Tibial artery (tissue), 4 donors: ENCODE measurements at regions of chr11 and their contacts with region 1.

Region 1: DNA sequence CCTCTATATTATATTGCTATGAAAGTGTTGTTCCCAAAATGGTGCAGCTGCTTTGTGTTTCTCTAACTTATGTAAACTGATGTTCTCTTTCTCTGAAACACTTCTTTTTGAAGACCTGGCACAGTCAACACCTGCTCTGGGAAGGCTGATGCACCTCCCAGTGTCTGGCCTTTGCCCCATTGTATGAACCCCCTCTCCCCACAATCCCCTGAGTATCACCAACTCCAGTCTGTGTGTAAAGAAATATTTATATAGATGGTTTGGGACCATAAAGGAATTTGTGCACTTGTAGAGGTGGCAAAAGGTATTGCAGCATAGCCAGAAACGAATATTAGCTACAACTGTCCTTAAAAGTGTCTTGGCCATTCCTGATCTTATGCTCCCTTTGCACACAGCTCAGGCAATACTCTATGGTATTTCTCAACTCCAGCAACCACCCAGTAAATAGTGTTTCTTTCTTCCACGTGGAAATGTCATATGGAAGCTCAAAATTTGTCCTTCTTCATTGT is 365.2 kb upstream of the DDI1 start:
- DNase-seq: no peak
- H3K4me3 ChIP-seq: no peak overlapping the region
- H3K27ac ChIP-seq: no peak overlapping the region
- H3K4me1 ChIP-seq: no peaks in the 10 kb centered on the region
- H3K27me3 ChIP-seq: no peaks in the 10 kb centered on the region
- CTCF ChIP-seq: no peak

Region 2: DNA sequence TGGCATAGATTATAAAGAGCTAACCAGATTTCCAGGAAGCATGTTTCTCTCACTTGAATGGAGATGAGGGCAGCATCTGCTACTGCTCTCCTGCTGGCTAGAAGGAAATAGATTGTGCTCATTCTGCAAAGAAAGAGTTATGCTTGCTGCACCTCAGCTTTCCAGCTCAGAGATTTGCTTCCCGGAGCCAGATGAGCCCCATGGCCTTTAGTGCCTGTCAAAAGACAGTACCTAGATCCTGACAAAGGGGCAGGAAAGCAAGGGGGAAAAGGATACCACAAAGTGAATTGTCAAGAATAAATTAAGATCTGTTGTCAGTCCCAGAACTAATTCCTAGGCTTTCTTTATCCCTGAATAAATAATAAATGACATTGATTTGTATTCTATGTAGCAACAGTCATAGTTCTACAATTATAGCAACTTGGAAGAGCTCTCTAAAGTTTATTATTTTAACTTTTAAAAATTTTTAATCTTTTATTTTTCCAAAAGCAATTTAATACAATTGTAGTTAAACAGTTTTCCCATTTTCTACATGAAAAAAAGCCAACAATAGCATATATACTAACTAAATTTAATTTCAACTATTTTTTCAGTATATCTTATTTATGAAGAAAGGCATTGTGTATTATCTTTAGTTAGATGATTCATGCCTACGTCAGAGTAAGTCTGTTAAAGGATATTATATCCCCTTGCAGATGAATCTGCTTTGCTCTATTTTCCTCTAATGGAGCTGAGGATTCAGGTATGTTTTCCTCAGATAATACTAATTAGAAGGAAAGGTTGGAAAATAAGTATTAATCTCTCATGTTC is 59.1 kb after region 1 on chr11:
- intact Hi-C with region 1: loop called (anchors 10 kb)
- DNase-seq: no peak
- H3K4me3 ChIP-seq: no peak overlapping the region
- H3K27ac ChIP-seq: no peak overlapping the region
- H3K4me1 ChIP-seq: peaks cover 0 to 4% (median 0%) of the 10 kb centered on the region in 4 donors
- H3K27me3 ChIP-seq: no peaks in the 10 kb centered on the region
- CTCF ChIP-seq: no peak

Region 3: GRCh38 chr11:103862094-103862801 is 191.1 kb after region 1 on chr11:
- intact Hi-C with region 1: no loop called
- DNase-seq: no peak
- H3K4me3 ChIP-seq: no peak overlapping the region
- H3K27ac ChIP-seq: no peak overlapping the region
- H3K4me1 ChIP-seq: no peaks in the 10 kb centered on the region
- H3K27me3 ChIP-seq: no peaks in the 10 kb centered on the region
- CTCF ChIP-seq: no peak